ENCODE measurements at regions of chr11 and their contacts with region 1.

Region 1: DNA sequence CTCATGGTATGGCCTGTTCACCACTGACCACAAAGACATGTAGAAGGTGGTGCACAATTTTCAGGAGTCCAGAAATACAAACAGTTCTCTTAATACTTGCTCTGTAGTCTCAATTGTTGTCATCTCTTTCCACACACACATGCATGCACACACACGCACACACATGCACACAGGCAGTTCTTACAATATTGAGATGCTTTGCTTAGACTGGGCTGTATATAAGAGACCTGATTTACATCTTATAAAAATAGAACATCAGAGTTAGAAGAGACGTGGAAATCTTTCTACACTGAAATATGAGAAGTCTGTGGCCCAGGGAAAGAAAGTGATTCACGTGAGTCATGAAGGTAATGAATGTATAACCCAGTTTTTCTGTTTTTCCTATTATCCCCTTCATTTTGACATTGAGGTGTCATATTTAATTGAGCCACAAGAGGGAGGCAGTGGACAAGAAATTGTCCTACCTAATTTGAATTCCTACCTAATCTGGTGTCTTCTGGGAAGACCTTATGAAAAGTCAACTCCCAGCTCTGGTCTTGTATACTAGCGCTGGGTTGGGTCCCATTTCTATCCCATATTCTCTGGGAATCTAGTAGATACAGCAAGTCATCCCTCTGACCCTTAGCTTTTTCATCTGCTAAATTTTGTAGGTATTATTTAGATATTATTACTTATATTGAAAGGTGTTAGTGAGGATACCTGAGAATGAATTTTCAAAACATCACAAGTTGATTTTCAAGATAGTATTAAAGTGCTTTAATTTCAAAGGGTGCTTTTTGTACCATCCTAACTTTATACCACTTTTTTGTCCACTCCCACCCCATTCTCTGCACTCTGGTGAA is 14.9 kb upstream of the MS4A4A start:
- DNase-seq: peak; percentile 36
- ATAC-seq: peak; percentile 86
- H3K4me3 ChIP-seq: no peak overlapping the region
- H3K27ac ChIP-seq: no peak overlapping the region
- H3K4me1 ChIP-seq: no peaks in the 10 kb centered on the region
- H3K27me3 ChIP-seq: no peaks in the 10 kb centered on the region
- CTCF ChIP-seq: peak; percentile 56 to 79 (median 67)
- POLR2A ChIP-seq: no peak
- RAD21 ChIP-seq: peak; percentile 84

Region 2: DNA sequence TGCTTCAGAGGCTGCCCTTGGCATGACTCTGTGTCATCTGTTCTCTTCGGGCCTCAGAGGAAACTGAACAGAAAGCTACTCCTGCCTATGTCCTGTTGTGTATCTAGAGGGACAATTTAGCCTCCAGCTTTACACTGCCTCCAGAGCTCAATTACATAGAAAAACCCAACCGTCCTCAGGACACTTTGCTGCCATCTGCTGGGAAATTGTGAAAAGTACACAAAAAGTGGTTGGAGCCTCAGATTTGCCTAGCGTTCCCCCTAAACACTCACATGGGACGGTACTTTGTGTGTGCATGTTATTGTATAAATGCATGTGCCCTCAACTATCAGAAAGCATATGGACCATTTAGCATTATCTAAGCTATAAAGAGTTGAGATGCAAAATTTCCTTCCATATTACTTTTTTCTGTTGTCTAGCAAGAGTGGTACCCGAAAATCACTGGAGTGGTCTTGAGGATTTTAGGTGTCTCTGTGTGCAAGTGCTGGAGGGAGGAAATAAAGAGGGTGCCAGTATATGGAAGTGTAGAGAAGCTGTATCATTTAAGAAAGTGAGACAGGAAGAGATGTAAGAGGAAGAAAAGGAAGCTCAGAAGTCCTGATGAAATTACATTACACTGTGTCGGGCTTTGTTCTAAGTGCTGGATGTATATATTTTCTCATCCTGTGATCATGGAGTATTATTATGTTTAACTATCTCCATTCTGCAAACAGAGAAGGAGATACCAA is 13.9 kb before region 1 on chr11:
- CTCF ChIA-PET with region 1: interaction called, 12 read pairs
- POLR2A ChIA-PET with region 1: no interaction called
- RAD21 ChIA-PET with region 1: no interaction called
- intact Hi-C with region 1: no loop called
- DNase-seq: peak; percentile 24
- ATAC-seq: peak; percentile 87
- H3K4me3 ChIP-seq: no peak overlapping the region
- H3K27ac ChIP-seq: no peak overlapping the region
- H3K4me1 ChIP-seq: no peaks in the 10 kb centered on the region
- H3K27me3 ChIP-seq: no peaks in the 10 kb centered on the region
- CTCF ChIP-seq: peak; percentile 39 to 60 (median 45); a peak in 5 of 6 replicates
- POLR2A ChIP-seq: no peak
- RAD21 ChIP-seq: peak; percentile 64

Region 3: GRCh38 chr11:60455531-60456042 is 190.0 kb after region 1 on chr11 and contains the start of gene MS4A1:
- CTCF ChIA-PET with region 1: no interaction called
- POLR2A ChIA-PET with region 1: no interaction called
- RAD21 ChIA-PET with region 1: no interaction called
- intact Hi-C with region 1: no loop called
- DNase-seq: no peak
- ATAC-seq: no peak
- H3K4me3 ChIP-seq: no peak within 1 kb of the TSS
- H3K27ac ChIP-seq: no peak within 1 kb of the TSS
- H3K4me1 ChIP-seq: no peaks in the 10 kb centered on the region
- H3K27me3 ChIP-seq: no peaks in the 10 kb centered on the region
- CTCF ChIP-seq: no peak
- POLR2A ChIP-seq: no peak
- RAD21 ChIP-seq: no peak
- total RNA-seq, gene MS4A1: 0.25 TPM

Region 4: DNA sequence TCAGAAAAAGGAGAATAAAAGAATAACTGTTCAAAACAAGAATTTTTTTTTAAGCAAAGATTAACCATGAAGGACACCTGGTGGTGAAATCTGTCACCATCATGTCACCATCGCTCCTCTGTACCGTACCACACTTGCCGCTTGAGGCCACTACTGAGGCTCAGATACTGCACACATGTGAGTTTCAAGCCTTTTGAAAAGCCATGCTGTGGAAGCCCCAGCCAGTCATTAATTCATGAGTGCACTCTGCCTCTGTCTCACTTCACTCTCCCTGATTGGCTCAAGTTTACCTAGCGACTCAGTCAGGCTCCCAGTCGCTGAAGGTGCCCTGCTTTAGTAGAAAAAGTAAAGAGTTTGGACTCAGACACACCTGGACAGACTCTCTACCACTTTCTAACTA is 220.4 kb after region 1 on chr11:
- CTCF ChIA-PET with region 1: interaction called, 3 read pairs
- POLR2A ChIA-PET with region 1: no interaction called
- RAD21 ChIA-PET with region 1: no interaction called
- intact Hi-C with region 1: loop called (anchors 1 kb)
- DNase-seq: peak; percentile 79
- ATAC-seq: peak; percentile 100
- H3K4me3 ChIP-seq: no peak overlapping the region
- H3K27ac ChIP-seq: no peak overlapping the region
- H3K4me1 ChIP-seq: peaks cover 0 to 2% of the 10 kb centered on the region in 2 experiments; a peak in 1 of 4 replicates
- H3K27me3 ChIP-seq: no peaks in the 10 kb centered on the region
- CTCF ChIP-seq: peak; percentile 85 to 98 (median 90)
- POLR2A ChIP-seq: no peak
- RAD21 ChIP-seq: peak; percentile 74

Region 5: GRCh38 chr11:60615497-60615896 is 349.9 kb after region 1 on chr11:
- CTCF ChIA-PET with region 1: interaction called, 15 read pairs
- POLR2A ChIA-PET with region 1: no interaction called
- RAD21 ChIA-PET with region 1: no interaction called
- intact Hi-C with region 1: loop called (anchors 1 kb)
- DNase-seq: no peak
- ATAC-seq: no peak
- H3K4me3 ChIP-seq: no peak overlapping the region
- H3K27ac ChIP-seq: no peak overlapping the region
- H3K4me1 ChIP-seq: peaks cover 0 to 6% of the 10 kb centered on the region in 2 experiments; a peak in 2 of 4 replicates
- H3K27me3 ChIP-seq: no peaks in the 10 kb centered on the region
- CTCF ChIP-seq: no peak
- POLR2A ChIP-seq: no peak
- RAD21 ChIP-seq: no peak

Region 6: DNA sequence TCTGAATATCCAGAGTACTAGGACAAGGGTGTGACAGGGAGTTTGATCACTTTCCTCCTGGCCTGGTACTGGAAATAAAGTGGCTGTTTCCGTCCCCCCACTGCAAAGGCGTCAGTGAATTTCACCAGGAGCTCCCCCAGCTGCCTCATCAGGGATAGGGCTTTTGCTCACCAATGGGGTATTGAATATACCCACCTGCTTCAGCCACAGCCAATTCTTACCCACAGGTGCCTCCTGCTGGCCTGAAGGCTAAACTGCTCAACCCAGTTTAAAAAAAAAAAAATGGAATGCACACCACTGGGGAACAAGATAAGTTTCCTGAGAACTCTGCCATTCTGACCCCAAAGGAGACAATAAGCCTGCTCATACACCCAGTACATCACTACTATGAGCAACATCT is 368.5 kb after region 1 on chr11:
- CTCF ChIA-PET with region 1: interaction called, 3 read pairs
- POLR2A ChIA-PET with region 1: no interaction called
- RAD21 ChIA-PET with region 1: no interaction called
- intact Hi-C with region 1: loop called (anchors 5 kb)
- DNase-seq: peak; percentile 1
- ATAC-seq: peak; percentile 47
- H3K4me3 ChIP-seq: no peak overlapping the region
- H3K27ac ChIP-seq: no peak overlapping the region
- H3K4me1 ChIP-seq: no peaks in the 10 kb centered on the region
- H3K27me3 ChIP-seq: no peaks in the 10 kb centered on the region
- CTCF ChIP-seq: peak in 2 of 3 experiments; percentile 36 to 50; a peak in 4 of 6 replicates
- POLR2A ChIP-seq: no peak
- RAD21 ChIP-seq: peak; percentile 24; the same call in 1 of the 2 replicates

Region 7: GRCh38 chr11:60756307-60757032 is 490.9 kb after region 1 on chr11 and contains the start of gene MS4A15:
- CTCF ChIA-PET with region 1: interaction called, 4 read pairs
- POLR2A ChIA-PET with region 1: no interaction called
- RAD21 ChIA-PET with region 1: no interaction called
- intact Hi-C with region 1: loop called (anchors 5 kb)
- DNase-seq: peak; percentile 29
- ATAC-seq: peak; percentile 94
- H3K4me3 ChIP-seq: no peak within 1 kb of the TSS
- H3K27ac ChIP-seq: no peak within 1 kb of the TSS
- H3K4me1 ChIP-seq: no peaks in the 10 kb centered on the region
- H3K27me3 ChIP-seq: peaks cover 16% of the 10 kb centered on the region; the same call in 1 of the 2 replicates
- CTCF ChIP-seq: peak; percentile 46 to 63 (median 50); a peak in 5 of 6 replicates
- POLR2A ChIP-seq: no peak
- RAD21 ChIP-seq: peak; percentile 38
- total RNA-seq, gene MS4A15: 1.5 TPM

Region 8: DNA sequence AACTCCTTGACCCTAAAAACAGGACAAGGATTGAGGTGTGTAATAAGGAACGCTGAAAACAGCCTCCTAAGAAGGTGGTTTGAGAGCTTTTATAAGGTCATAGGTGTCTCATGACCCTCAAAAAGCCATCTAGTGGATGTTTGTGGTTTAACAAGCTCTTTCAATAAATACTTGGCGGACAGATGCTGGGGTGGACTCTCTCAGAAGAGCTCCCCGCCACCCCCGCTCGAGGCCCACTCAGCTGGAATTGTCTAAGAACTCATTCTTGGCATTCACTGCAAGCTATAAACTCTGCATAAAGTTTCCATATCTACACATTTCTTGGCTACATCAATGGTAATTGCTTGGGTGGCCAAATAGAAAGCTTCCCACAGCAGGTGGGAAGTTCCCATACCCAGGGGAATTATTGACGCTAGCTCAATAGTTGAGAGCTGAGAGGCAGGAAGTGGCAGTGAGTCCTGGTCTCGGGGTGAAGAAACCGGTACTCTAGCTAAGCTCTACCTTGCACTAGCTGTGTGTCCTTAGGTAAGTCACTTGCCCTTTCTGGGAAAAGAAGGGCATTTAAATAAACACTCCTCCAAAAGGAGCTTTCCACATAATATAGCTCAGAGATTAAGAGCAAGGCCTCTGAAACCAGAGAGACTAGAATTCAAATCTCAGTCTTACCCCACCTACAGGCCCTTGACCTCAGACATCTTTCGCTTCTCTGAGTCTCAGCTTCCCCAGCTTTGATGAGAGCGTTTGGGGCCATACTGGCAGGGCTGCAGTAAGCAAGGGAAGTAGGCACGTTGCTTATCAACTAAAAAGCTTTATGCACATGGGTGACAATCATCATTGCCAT is 497.5 kb after region 1 on chr11:
- CTCF ChIA-PET with region 1: interaction called, 17 read pairs
- POLR2A ChIA-PET with region 1: no interaction called
- RAD21 ChIA-PET with region 1: no interaction called
- intact Hi-C with region 1: loop called (anchors 5 kb)
- DNase-seq: peak; percentile 7
- ATAC-seq: peak; percentile 49
- H3K4me3 ChIP-seq: no peak overlapping the region
- H3K27ac ChIP-seq: no peak overlapping the region
- H3K4me1 ChIP-seq: peaks cover 8 to 10% of the 10 kb centered on the region in 2 experiments; a peak in 2 of 4 replicates
- H3K27me3 ChIP-seq: 0 out of 2 replicates have a peak, but pooled peaks cover 5% of the 10 kb centered on the region
- CTCF ChIP-seq: peak; percentile 34 to 59 (median 47); a peak in 5 of 6 replicates
- POLR2A ChIP-seq: no peak
- RAD21 ChIP-seq: peak; percentile 21; the same call in 1 of the 2 replicates